MCF 10A (cell line): ENCODE measurements at regions of chr11 and their contacts with region 1.

Region 1: DNA sequence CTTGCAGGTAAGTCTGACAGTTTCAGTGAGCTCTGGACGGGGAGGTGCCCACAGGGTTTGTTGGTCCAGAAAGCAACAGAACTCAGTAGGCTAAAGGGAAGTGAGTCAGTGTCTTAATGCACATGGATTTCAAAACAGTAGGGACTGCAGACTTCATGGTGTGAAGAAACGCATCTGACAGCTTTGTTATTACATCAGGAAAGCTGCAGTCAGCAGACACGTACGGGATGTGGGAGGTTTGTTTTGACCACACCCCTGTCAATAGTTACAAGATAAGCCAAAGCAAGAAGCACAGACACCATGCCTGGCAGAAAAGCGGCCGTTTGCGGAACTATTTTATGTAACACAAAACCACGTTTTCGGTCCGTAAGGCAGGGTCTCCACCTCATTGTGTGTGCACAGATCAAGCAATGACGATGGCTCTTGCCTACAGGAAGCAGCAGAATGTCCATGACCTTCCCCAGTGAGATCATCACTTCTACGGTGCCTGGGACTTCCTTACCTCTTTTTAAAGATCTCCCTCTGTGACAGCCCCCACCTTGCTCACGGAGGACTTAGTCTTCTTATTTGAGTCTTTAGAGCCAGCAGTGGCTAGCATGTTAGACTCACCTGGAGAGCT is 58.2 kb upstream of the FTH1 start:
- DNase-seq: peak; percentile 98
- H3K4me3 Mint-ChIP-seq: peak overlapping the region; percentile 58
- H3K27ac Mint-ChIP-seq: peak overlapping the region; percentile 97
- H3K4me1 Mint-ChIP-seq: peaks cover 34% of the 10 kb centered on the region
- H3K27me3 Mint-ChIP-seq: no peaks in the 10 kb centered on the region
- CTCF ChIP-seq: no peak

Region 2: DNA sequence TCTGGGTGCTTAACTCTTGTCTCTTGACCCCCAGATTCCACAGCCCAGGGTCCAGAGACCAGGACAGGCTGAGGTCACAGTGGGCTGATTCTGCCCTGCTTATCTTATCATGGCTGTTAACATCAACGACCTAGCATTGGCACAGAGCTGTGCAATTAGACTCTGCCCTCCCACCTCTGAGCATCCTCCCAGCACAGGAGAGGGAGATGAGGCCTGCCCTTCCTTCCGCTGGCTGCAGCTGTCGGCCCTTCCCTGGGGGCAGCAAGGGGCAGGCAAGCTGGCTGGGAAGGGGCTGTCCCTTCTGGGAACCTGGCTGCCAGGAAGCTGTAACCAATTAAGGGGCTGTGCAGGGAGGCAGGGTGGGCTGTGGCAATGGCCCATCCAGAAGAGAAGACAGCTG is 494.6 kb before region 1 on chr11:
- CTCF ChIA-PET with region 1: no interaction called
- POLR2A ChIA-PET with region 1: no interaction called
- intact Hi-C with region 1: no loop called
- DNase-seq: no peak
- H3K4me3 Mint-ChIP-seq: no peak overlapping the region
- H3K27ac Mint-ChIP-seq: no peak overlapping the region
- H3K4me1 Mint-ChIP-seq: peaks cover 19% of the 10 kb centered on the region
- H3K27me3 Mint-ChIP-seq: no peaks in the 10 kb centered on the region
- CTCF ChIP-seq: no peak

Region 3: DNA sequence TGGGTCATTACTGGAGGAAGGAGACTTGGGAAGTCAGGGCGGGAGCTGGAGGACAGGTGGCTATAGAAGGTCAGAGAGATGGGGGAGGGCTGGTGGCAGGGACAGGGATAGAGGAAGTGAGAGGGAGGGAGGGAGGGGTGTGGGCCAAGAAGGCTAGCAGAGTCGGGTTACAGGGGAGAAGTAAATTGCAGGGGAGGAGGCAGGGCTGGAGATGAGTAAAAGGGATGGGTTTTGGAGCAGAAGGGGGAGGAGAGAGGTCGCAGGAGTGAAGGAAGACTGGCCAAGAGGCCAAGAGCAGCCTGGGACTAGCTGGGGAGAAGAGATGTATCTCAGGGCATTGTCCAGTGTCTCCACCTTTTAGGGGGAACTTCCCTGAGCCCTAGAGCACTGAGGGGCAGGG is 484.0 kb before region 1 on chr11:
- CTCF ChIA-PET with region 1: no interaction called
- POLR2A ChIA-PET with region 1: no interaction called
- intact Hi-C with region 1: no loop called
- DNase-seq: peak; percentile 59
- H3K4me3 Mint-ChIP-seq: no peak overlapping the region
- H3K27ac Mint-ChIP-seq: peak overlapping the region; percentile 64
- H3K4me1 Mint-ChIP-seq: peaks cover 19% of the 10 kb centered on the region
- H3K27me3 Mint-ChIP-seq: no peaks in the 10 kb centered on the region
- CTCF ChIP-seq: no peak

Region 4: GRCh38 chr11:61820174-61820573 is 205.4 kb before region 1 on chr11:
- CTCF ChIA-PET with region 1: no interaction called
- POLR2A ChIA-PET with region 1: no interaction called
- intact Hi-C with region 1: no loop called
- DNase-seq: peak; percentile 74
- H3K4me3 Mint-ChIP-seq: no peak overlapping the region
- H3K27ac Mint-ChIP-seq: peak overlapping the region; percentile 77
- H3K4me1 Mint-ChIP-seq: peaks cover 26% of the 10 kb centered on the region
- H3K27me3 Mint-ChIP-seq: no peaks in the 10 kb centered on the region
- CTCF ChIP-seq: no peak

Region 5: DNA sequence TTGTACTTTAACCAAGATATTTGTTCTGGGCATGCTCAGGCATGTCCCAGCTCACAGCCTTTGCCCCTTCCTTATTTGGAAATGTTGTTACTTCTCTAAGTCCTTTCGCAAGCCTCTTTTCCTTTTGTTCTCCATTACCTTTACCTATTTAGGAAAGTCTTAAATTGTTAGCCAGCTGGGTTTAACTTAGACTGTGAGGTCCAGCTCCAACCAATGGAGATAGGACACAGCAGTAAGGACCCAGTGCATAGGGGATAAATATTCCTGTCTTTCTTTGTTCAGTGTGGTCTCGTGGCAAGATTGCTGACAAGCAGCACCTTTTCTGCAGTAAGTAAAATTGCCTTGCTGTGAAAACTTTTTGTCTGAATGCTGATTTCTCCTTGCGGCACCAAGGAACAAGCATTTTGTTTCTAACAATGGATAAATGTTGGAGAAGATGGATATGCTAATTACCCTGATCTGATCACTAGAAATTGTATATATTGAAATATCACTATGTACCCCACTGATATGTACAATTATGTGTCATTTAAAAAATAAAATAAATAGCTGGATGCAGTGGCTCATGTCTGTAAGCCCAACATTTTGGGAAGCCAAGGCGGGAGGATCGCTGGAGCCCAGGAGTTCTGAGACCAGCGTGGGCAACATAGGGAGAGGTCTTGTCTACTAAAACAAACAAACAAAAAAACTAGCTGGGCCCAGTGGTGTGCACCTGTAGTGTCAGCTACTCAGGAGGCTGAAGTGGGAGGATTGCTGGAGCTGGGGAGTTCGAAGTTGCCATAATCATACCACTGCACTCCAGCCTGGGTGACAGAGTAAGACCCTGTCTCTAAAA is 26.2 kb before region 1 on chr11:
- CTCF ChIA-PET with region 1: no interaction called
- POLR2A ChIA-PET with region 1: interaction called, 12 read pairs
- intact Hi-C with region 1: no loop called
- DNase-seq: peak; percentile 74
- H3K4me3 Mint-ChIP-seq: no peak overlapping the region
- H3K27ac Mint-ChIP-seq: peak overlapping the region; percentile 96
- H3K4me1 Mint-ChIP-seq: peaks cover 6% of the 10 kb centered on the region
- H3K27me3 Mint-ChIP-seq: no peaks in the 10 kb centered on the region
- CTCF ChIP-seq: no peak

Region 6: GRCh38 chr11:62048065-62048464 is 22.5 kb after region 1 on chr11:
- CTCF ChIA-PET with region 1: interaction called, 14 read pairs
- POLR2A ChIA-PET with region 1: interaction called, 70 read pairs
- intact Hi-C with region 1: loop called (anchors 2 kb)
- DNase-seq: peak; percentile 31
- H3K4me3 Mint-ChIP-seq: peak overlapping the region; percentile 31
- H3K27ac Mint-ChIP-seq: peak overlapping the region; percentile 77
- H3K4me1 Mint-ChIP-seq: peaks cover 35% of the 10 kb centered on the region
- H3K27me3 Mint-ChIP-seq: no peaks in the 10 kb centered on the region
- CTCF ChIP-seq: no peak

Region 7: DNA sequence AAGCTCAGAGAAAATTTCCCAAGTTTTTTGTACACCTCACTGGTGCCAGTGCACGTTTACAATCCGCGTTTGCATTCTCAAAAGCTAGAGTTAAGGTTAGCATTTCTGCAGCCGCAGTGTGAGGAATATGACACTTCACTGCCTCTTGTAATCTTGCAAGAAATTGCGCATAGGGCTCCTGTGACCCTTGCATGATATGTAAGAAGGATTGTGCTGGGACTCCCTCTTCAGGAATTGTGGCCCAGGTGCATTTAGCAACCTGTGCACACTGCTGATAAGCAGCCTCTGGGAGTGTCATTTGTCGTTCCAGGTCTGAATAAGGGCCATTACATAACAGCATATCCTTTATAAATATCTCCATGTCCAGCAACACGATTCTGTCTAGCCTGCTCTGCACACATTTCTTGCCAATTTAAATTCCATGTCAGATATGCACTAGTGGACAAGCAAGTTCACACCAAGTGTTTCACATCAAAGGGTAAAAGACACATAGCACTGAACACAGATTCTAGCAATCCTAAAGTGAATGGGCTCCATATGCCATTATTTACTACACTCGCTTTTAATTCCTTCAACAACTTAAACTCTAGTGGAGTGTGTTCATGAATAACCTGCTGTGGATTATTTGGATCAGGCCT is 29.0 kb after region 1 on chr11:
- CTCF ChIA-PET with region 1: interaction called, 14 read pairs
- POLR2A ChIA-PET with region 1: interaction called, 15 read pairs
- intact Hi-C with region 1: loop called (anchors 2 kb)
- DNase-seq: peak; percentile 93
- H3K4me3 Mint-ChIP-seq: peak overlapping the region; percentile 26
- H3K27ac Mint-ChIP-seq: peak overlapping the region; percentile 75
- H3K4me1 Mint-ChIP-seq: peaks cover 18% of the 10 kb centered on the region
- H3K27me3 Mint-ChIP-seq: no peaks in the 10 kb centered on the region
- CTCF ChIP-seq: peak; percentile 81